Heart left ventricle (tissue), 16 donors: ENCODE measurements at regions of chr1 and their contacts with region 1.

Region 1: DNA sequence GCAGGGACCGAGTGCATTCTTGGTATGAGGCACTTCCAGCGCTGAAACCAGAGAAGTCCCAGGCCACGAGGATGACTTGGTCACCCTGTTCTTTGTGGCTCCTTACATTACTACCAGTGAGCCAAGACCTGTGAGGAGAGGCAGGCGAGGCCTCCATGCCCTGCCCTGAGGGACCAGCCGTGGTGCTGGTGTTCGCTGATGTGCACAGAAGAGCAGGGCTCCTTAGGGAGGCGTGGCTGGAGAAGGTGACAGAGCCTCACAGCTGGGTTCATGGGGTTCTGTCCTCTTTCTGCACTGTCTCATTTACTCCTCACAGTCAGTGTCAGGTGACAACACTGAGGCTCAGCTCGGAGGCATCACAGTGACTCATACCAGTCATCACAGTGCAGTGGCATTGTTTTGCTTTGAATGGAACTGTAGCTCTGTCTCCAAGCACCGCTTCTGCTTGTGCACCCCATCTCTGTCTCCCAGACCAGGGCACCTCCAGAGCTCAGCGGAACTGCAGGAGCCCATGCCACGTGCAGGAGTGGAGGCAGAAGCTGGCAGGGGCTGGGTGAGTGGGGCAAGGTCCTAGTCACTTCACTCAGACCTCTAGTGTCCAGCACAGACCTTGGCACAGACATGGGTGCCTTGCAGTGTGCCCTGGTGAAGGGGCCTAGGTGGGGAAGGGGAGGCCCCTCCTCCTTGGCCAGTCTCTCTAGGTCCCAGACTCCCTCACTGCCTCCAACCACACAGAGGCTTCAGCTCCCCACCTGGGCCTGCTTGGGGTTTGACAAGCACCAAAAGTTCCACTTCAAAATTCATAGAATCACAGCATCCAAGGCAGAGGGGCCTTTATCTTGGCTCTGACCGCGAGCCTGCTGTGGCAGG is 310.9 kb downstream of the MATN1 start:
- DNase-seq: peak in 1 of 5 donors; percentile 5
- ATAC-seq: peak in 1 of 4 donors; percentile 11
- H3K4me3 ChIP-seq: no peak overlapping the region
- H3K27ac ChIP-seq: no peak overlapping the region
- H3K4me1 ChIP-seq: no peaks in the 10 kb centered on the region
- H3K27me3 ChIP-seq: peaks cover 0 to 42% (median 5%) of the 10 kb centered on the region in 9 donors
- CTCF ChIP-seq: no peak
- POLR2A ChIP-seq: no peak

Region 2: DNA sequence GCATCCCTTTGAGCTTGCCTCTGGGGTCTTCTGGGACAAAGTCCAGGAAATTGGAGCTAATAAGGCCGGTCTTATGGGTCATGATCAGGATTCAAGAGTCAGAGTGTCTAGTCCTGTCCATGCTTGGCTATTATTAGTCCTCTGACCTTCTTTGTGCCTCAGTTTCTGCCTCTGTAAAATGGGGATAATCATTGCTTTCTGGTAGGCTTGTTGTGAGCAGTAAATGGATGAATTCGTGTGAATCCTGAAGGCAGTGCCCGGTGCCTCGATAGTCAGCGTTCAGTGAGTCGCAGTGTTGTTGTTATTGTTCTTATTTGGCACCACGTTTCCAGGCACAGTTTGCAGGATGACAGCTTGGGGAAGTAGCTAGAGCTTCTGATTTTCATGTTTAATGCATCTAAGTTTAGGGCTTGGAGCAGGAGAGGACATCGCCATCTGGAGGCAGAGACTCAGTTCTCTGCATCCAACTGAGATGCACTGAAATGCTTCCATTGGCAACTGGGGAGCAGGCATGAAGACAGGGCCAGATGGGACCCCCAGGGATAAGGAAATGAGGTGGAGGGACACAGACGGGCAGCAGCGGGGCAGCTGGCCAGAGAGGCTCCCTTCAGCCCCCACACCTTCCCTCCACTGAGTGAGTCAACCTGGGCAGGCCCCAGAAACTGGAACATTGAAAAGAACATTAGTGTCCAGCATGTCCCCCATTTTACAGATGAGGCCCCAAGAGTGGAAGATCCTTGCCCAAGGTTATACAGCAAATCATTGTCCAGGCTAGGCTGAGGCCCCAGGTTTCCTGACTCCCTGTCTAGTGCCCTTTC is 1015.8 kb before region 1 on chr1:
- intact Hi-C with region 1: loop called in 2 of 10 experiments (anchors 2 to 10 kb)
- DNase-seq: no peak
- ATAC-seq: no peak
- H3K4me3 ChIP-seq: no peak overlapping the region
- H3K27ac ChIP-seq: no peak overlapping the region
- H3K4me1 ChIP-seq: peaks cover 0 to 8% (median 0%) of the 10 kb centered on the region in 12 donors
- H3K27me3 ChIP-seq: peaks cover 0 to 6% (median 0%) of the 10 kb centered on the region in 9 donors
- CTCF ChIP-seq: no peak
- POLR2A ChIP-seq: no peak

Region 3: DNA sequence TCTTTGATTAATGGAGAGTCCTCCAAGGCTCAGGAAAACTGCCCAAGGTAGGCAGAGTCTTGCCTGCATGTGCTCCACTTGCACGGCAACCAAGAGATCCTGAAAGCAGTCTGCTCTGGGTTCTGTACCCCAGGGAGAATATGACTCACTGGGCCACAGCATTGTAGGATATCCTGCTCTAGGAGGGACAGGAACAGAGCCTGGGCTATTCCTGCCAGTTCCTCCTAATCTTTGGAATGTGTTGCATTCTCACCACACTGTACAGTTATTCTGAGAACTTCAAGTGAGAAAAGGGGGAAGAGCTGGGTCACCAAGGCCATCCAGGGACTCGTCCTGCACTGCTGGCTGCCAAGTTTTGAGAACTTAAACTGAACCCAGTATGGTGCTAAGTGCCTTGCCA is 32.4 kb after region 1 on chr1:
- intact Hi-C with region 1: no loop called
- DNase-seq: no peak
- ATAC-seq: peak in 3 of 4 donors; percentile 61 to 70 (median 65)
- H3K4me3 ChIP-seq: no peak overlapping the region
- H3K27ac ChIP-seq: no peak overlapping the region
- H3K4me1 ChIP-seq: no peaks in the 10 kb centered on the region
- H3K27me3 ChIP-seq: no peaks in the 10 kb centered on the region
- CTCF ChIP-seq: no peak
- POLR2A ChIP-seq: no peak

Region 4: GRCh38 chr1:30506291-30507015 is 94.0 kb after region 1 on chr1:
- intact Hi-C with region 1: loop called in 1 of 10 experiments (anchors 10 kb)
- DNase-seq: no peak
- ATAC-seq: no peak
- H3K4me3 ChIP-seq: no peak overlapping the region
- H3K27ac ChIP-seq: no peak overlapping the region
- H3K4me1 ChIP-seq: no peaks in the 10 kb centered on the region
- H3K27me3 ChIP-seq: peaks cover 0 to 11% (median 0%) of the 10 kb centered on the region in 9 donors
- CTCF ChIP-seq: no peak
- POLR2A ChIP-seq: no peak

Region 5: GRCh38 chr1:30525971-30526651 is 113.6 kb after region 1 on chr1:
- intact Hi-C with region 1: loop called in 1 of 10 experiments (anchors 5 kb)
- DNase-seq: peak in 4 of 5 donors; percentile 28 to 83 (median 42)
- ATAC-seq: peak in 3 of 4 donors; percentile 5 to 30 (median 25)
- H3K4me3 ChIP-seq: no peak overlapping the region
- H3K27ac ChIP-seq: peak overlapping the region; percentile 51 to 98 (median 83)
- H3K4me1 ChIP-seq: peaks cover 0 to 62% (median 26%) of the 10 kb centered on the region in 12 donors
- H3K27me3 ChIP-seq: peaks cover 0 to 12% (median 0%) of the 10 kb centered on the region in 9 donors
- CTCF ChIP-seq: no peak
- POLR2A ChIP-seq: no peak

Region 6: DNA sequence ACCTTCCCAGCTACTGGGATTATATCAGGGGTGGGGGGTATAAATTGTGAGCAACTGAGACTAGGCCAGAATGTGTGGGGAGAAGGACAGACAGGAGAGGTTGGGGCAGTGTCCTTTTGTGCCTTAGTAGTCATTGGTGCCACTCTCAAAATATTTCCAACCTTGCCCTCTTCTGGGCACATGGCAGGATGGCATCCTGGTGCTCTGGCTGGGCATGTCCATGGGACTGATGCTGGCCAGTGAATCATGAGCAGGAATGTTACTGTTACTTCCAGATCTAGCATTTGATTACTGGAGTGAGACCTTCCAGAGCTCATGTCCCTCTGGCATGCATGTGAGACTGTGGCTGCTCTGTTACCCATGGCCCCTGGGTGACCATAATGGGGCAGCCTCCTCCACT is 159.7 kb after region 1 on chr1:
- intact Hi-C with region 1: loop called in 2 of 10 experiments (anchors 10 kb)
- DNase-seq: no peak
- ATAC-seq: peak in 3 of 4 donors; percentile 68 to 89 (median 74)
- H3K4me3 ChIP-seq: no peak overlapping the region
- H3K27ac ChIP-seq: no peak overlapping the region
- H3K4me1 ChIP-seq: no peaks in the 10 kb centered on the region
- H3K27me3 ChIP-seq: peaks cover 0 to 4% (median 0%) of the 10 kb centered on the region in 9 donors
- CTCF ChIP-seq: peak in 8 of 12 donors; percentile 10 to 40 (median 22)
- POLR2A ChIP-seq: no peak